Ovary (tissue), 10 donors: ENCODE measurements at regions of chr3 and their contacts with region 1.

Region 1: GRCh38 chr3:9249273-9250192 is at the start of gene SRGAP3:
- DNase-seq: peak; percentile 86 to 90 (median 87)
- H3K4me3 ChIP-seq: peak within 1 kb of the TSS; percentile 37
- H3K27ac ChIP-seq: peak within 1 kb of the TSS; percentile 10 to 42
- H3K4me1 ChIP-seq: peaks cover 4% of the 10 kb centered on the region
- H3K27me3 ChIP-seq: no peaks in the 10 kb centered on the region
- CTCF ChIP-seq: peak in 2 of 3 donors; percentile 51 to 69
- EP300 ChIP-seq: no peak
- POLR2A ChIP-seq: no peak
- total RNA-seq, gene SRGAP3: 6.4 to 36.8 (median 15.8) TPM

Region 2: DNA sequence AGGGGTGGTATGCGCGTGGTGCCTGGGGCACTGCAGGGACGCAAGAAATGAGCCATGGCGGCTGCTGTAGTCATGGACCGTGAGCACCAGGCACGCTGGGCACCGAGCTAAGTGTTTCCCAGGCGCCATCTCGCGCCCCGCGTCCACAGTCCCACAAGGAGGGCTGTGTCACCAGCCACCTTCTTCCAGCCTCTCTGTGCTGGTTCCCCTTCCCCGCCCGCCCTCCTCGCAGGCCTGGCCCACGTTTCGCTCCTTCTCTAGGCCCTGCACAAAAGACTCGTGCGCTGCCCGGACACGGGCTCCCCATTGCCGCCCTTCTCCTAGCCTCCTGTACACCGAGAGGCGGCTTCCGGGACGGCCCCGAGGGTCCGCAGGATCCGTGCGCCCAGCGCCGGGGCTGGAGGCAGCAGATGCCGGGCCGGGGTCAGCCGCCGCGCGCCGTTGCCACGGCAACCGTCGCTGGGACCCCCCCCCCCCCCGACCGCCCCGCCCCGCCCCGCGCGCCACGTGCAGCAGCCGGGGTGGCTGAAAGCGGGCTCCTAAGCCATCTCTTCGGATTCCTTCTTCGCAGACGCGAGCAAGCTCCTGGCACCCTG is 113.5 kb before region 1 on chr3:
- intact Hi-C with region 1: loop called in 1 of 4 experiments (anchors 5 kb)
- DNase-seq: peak in 3 of 5 donors; percentile 35 to 58 (median 47)
- H3K4me3 ChIP-seq: peak overlapping the region; percentile 24
- H3K27ac ChIP-seq: no peak overlapping the region
- H3K4me1 ChIP-seq: peaks cover 6% of the 10 kb centered on the region
- H3K27me3 ChIP-seq: no peaks in the 10 kb centered on the region
- CTCF ChIP-seq: no peak
- EP300 ChIP-seq: no peak
- POLR2A ChIP-seq: no peak